ENCODE measurements at regions of chr9 and their contacts with region 1.

Region 1: DNA sequence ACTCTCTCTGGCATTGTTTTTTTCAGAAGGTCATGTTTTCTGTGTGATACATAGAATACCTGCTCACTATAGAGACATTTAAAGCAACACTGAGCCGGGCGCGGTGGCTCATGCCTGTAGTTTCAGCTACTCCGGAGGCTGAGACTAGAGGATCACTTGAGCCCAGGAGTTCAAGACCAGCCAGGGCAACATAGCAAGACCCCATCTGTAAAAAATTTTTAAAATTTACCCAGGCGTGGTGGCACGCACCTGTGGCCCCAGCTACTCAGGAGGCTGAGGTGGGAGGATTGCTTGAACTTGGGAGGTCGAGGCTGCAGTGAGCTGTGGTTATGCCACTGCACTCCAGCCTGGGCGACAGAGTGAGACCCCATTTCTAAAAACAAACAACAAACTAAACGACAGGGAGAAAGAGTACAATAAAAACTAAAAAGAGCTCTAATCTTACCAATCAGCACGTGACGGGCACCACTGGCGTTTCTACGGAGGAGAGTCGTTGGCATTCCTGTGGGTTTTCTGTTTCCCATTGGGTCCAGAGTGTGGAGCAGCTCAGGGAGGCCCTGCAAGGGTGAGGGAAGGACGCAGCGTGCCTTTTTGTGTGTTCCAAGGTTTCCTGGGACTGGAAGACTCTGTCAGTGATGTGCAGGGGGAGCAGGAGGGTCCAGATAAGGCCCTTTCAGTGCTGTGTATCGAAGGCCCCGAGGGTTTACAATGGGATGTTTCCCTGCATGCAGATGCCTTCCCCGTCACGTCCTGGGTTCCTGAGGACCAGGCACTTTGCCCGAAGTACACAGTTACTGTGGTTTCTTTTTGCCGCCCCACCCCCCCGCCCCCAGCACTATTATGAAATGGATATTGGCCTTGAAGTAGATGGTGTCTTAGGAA is 7.2 kb upstream of the RNU6ATAC start:
- DNase-seq: no peak
- ATAC-seq: no peak
- H3K4me3 ChIP-seq: no peak overlapping the region
- H3K4me1 ChIP-seq: peaks cover 4% of the 10 kb centered on the region
- CTCF ChIP-seq: no peak

Region 2: GRCh38 chr9:134088063-134088725 is 83.4 kb before region 1 on chr9:
- intact Hi-C with region 1: no loop called
- DNase-seq: peak in 1 of 3 donors; percentile 11
- ATAC-seq: peak; percentile 40
- H3K4me3 ChIP-seq: no peak overlapping the region
- H3K4me1 ChIP-seq: no peaks in the 10 kb centered on the region
- CTCF ChIP-seq: no peak

Region 3: DNA sequence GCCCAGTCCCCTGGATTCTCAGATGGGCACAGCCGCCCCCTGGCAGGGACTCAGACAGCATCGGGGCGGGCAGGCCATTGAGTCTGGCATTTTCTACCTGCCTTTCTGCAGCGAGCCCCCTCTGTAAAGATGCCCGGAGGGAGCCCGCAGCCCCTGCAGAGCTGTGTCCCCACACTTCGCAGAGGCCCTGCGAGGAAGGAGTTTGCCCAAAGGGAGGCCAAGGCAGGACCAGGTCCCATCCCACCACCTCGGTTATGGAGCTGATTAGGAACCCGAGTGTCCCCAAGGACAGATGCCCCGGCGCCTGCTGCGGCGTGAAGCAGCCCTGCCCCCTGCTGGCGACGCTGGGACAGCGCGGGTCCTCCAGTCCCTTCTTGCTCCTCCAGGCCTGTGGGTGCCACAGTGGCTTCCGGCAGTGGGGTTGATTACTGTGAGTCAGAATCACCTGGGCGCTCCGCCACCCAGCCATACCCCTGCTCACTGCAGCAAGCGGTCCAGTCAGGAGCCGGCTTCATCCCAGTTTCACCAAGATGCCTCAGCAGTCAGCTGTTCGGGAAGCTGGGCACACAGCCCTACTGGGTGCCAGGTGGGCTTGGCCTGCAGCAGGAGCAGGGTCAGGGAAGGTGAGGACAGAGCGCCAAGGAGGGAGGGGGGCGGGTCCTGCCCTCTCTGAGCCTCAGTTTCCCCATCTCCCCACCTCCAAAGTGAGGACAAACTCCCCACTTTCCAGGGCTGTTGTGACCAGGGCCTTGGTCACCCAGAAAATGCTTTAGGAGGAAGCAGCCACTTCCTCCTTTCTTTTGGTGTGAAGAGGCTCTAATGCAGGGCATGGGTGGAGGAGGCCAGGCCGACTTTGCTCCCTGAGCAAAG is 271.8 kb after region 1 on chr9:
- intact Hi-C with region 1: loop called (anchors 2 to 5 kb)
- DNase-seq: peak; percentile 88 to 93 (median 89)
- ATAC-seq: peak; percentile 95
- H3K4me3 ChIP-seq: no peak overlapping the region
- H3K4me1 ChIP-seq: peaks cover 2% of the 10 kb centered on the region
- CTCF ChIP-seq: peak; percentile 96